Posterior cingulate gyrus (tissue), 11 donors: ENCODE measurements at regions of chr6 and their contacts with region 1.

Region 1: DNA sequence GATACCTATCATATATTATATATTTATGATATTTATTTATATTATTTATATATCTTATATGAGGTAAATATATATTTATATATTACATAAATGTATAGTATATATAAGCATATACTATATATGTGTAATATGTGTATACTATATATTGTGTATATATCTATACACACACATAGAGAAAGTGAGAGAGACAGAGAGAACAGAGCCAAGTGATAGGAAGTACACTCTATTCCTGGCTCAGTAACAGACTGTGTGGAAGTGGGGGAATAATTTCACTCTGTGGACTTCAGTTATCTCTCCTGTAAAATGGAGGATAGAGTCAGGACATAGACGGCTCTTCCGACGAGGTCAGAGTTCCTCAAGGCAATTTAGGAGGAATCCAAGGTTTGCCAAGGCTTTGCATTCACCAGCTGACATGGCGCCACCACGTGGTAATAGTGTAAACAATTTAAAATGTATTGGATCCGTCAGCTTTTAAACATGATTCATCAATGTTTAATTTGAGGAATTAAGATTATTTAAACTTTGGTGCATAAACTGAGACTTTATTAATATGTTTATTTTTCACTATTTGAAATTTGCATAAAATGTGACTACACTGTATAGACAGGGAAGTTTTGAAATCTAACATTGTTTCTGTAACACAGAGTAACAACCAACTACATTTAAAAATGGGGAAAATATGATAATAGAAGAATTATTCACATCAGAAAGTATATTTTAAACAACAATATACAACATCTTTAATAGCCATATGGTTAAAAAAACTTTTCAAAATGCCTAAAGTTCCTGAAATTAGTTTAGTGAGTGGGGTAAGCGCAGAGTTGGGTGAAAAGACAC is 75.4 kb upstream of the TMEM244 start:
- DNase-seq: peak in 7 of 10 donors; percentile 22 to 85 (median 47)

Region 2: GRCh38 chr6:129598244-129599187 is 338.0 kb before region 1 on chr6:
- intact Hi-C with region 1: loop called (anchors 5 kb)
- DNase-seq: no peak

Region 3: GRCh38 chr6:129785047-129785755 is 151.3 kb before region 1 on chr6:
- intact Hi-C with region 1: no loop called
- DNase-seq: no peak

Region 4: DNA sequence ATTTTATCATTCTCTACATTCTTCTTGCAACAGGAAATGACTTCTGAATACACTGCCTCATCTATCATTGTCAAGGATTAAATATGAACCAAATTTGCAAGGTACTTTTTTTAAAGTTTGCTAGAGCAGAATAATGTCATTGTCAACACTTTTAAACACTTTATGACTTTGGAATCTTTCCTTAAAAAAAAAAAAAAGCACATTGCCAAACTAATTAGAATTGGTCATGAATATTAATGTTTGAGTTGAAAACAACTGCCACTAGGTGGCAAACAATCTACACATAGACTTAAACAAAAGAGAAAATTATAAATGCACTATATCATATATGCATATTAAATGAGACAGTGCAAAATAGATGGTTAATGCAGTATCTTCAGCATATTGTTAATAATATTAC is 42.9 kb before region 1 on chr6:
- intact Hi-C with region 1: loop called (anchors 2 kb)
- DNase-seq: no peak

Region 5: GRCh38 chr6:129908858-129909257 is 27.7 kb before region 1 on chr6:
- intact Hi-C with region 1: no loop called
- DNase-seq: no peak